Heart left ventricle (tissue), 16 donors: ENCODE measurements at regions of chr7 and their contacts with region 1.

Region 1: DNA sequence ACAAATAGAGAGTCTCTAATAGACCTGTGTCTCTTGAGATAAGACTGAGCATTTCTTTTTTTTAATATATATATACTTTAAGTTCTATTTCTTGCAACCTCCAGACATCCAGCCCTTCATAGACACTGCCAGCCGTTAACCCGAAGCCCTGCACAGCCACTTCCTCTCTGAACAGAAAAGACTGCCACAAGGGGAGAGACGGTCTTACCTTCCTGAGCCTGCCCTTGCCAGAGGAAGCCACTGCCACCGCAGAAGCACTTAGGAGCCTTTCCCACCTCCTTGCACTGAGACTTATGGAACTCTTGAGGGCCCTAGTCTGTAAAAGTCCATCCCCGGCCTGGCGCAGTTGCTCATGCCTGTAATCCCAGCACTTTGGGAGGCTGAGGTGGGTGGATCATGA is 31.8 kb upstream of the PRSS1 start:
- DNase-seq: no peak
- ATAC-seq: no peak
- H3K4me3 ChIP-seq: no peak overlapping the region
- H3K27ac ChIP-seq: no peak overlapping the region
- H3K4me1 ChIP-seq: no peaks in the 10 kb centered on the region
- H3K27me3 ChIP-seq: peaks cover 0 to 3% (median 0%) of the 10 kb centered on the region in 9 donors
- CTCF ChIP-seq: no peak
- POLR2A ChIP-seq: no peak

Region 2: GRCh38 chr7:142776206-142776844 is 58.9 kb after region 1 on chr7:
- intact Hi-C with region 1: loop called in 4 of 10 experiments (anchors 5 kb)
- DNase-seq: no peak
- ATAC-seq: peak in 3 of 4 donors; percentile 29 to 67 (median 45)
- H3K4me3 ChIP-seq: no peak overlapping the region
- H3K27ac ChIP-seq: no peak overlapping the region
- H3K4me1 ChIP-seq: peaks cover 0 to 9% (median 0%) of the 10 kb centered on the region in 12 donors
- H3K27me3 ChIP-seq: peaks cover 0 to 9% (median 0%) of the 10 kb centered on the region in 9 donors
- CTCF ChIP-seq: no peak
- POLR2A ChIP-seq: no peak

Region 3: GRCh38 chr7:142795339-142795863 is 77.9 kb after region 1 on chr7:
- intact Hi-C with region 1: no loop called
- DNase-seq: no peak
- ATAC-seq: no peak
- H3K4me3 ChIP-seq: peak overlapping the region in 1 of 12 donors; percentile 61
- H3K27ac ChIP-seq: peak overlapping the region in 1 of 12 donors; percentile 83
- H3K4me1 ChIP-seq: peaks cover 0 to 19% (median 13%) of the 10 kb centered on the region in 12 donors
- H3K27me3 ChIP-seq: peaks cover 19 to 81% (median 43%) of the 10 kb centered on the region in 9 donors
- CTCF ChIP-seq: no peak
- POLR2A ChIP-seq: no peak

Region 4: GRCh38 chr7:142956951-142957623 is 239.6 kb after region 1 on chr7:
- intact Hi-C with region 1: no loop called
- DNase-seq: no peak
- ATAC-seq: peak in 1 of 4 donors; percentile 49
- H3K4me3 ChIP-seq: no peak overlapping the region
- H3K27ac ChIP-seq: no peak overlapping the region
- H3K4me1 ChIP-seq: no peaks in the 10 kb centered on the region
- H3K27me3 ChIP-seq: no peaks in the 10 kb centered on the region
- CTCF ChIP-seq: no peak
- POLR2A ChIP-seq: no peak

Region 5: DNA sequence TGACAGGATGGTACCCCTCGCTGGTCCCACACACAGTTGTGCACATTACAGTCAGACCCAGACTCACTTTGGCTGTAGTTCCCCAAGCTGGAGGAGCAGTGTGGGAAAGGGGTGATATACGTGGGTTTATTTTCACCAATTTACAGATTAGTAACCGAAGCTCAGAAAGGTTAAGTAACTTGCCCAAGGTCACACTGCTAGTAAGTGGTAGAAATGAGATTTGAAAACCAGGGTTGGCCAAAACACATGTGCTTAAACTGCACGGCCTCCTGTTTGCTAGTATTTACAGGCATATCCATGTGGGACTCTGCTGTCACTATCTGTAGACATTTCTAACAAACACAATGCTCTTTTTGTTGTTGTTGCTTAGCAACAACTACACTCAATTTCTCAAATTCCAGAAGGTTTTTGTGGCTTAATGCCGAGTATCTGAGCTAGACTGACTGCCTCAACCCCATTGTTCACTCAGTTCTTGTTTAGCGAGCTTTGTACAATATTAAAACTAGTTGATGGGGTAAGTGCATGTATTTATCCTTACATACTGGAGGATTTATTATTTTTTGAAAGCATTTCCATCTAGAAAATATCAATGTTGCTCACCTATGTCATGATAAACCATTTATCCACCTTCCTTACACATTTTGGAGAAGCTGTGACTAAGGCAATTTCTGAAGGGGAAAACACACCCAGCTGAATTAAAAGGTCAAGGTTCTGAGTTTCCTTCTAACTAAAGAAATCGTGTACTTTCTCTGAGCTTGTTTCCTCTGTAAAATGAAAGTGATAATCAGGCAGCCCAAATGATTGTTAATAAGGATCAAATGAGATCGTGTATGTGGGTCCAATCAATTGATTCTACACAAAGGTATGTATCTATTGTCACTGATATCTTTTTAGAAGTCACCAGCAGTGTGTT is 562.0 kb after region 1 on chr7:
- intact Hi-C with region 1: no loop called
- DNase-seq: no peak
- ATAC-seq: peak; percentile 28 to 81 (median 62)
- H3K4me3 ChIP-seq: peak overlapping the region in 6 of 12 donors; percentile 7 to 29 (median 19)
- H3K27ac ChIP-seq: peak overlapping the region; percentile 35 to 81 (median 56)
- H3K4me1 ChIP-seq: peaks cover 0 to 38% (median 18%) of the 10 kb centered on the region in 12 donors
- H3K27me3 ChIP-seq: no peaks in the 10 kb centered on the region
- CTCF ChIP-seq: no peak
- POLR2A ChIP-seq: no peak